HepG2 (cell line): ENCODE measurements at regions of chrX and their contacts with region 1.

Region 1: DNA sequence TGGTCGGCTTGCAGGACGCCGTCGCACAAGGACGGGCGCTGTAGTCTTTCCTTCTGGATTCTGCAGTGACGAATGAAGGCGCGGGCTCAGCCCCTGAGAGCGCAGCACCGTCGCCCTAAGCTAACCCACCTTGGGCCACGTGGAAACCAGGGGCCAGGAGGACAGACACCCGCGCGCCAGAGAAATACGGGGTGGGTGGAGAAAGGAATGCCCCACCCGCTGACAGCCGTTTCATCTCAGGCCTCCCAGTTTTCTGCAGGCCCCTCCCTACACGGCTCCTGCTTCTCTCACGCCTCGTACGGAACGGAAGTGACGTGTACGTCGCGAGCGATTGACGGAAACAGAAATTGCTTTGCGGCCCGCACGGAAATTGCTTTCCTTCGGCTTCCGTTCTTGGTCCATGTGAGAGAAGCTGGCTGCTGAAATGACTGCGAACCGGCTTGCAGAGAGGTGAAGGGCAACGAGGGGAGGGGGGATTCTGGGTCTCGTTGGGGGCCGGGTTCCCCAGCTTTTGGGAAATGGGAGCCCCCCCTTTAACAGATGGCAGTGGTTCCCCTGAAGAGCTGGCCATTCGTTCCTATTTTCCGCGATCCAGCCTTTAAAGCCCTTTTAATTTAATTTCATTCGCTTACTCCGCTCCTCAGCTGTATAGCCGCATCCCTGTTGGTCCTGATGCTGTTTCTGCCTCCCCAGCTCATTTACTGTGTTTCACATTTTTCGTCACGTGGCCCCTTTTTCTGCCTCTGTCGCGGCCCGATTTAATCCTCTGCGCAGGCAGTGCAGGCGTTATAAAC is at the start of gene UTP14A:
- DNase-seq: peak; percentile 87
- ATAC-seq: peak; percentile 98
- H3K4me3 ChIP-seq: peak within 1 kb of the TSS; percentile 67 to 82 (median 72)
- H3K27ac ChIP-seq: peak within 1 kb of the TSS; percentile 71
- H3K4me1 ChIP-seq: no peaks in the 10 kb centered on the region
- H3K27me3 ChIP-seq: no peaks in the 10 kb centered on the region
- CTCF ChIP-seq: no peak
- EP300 ChIP-seq: no peak
- POLR2A ChIP-seq: peak; percentile 49 to 67
- RAD21 ChIP-seq: no peak
- total RNA-seq, gene UTP14A: 19.0 and 27.4 TPM in 2 replicates

Region 2: DNA sequence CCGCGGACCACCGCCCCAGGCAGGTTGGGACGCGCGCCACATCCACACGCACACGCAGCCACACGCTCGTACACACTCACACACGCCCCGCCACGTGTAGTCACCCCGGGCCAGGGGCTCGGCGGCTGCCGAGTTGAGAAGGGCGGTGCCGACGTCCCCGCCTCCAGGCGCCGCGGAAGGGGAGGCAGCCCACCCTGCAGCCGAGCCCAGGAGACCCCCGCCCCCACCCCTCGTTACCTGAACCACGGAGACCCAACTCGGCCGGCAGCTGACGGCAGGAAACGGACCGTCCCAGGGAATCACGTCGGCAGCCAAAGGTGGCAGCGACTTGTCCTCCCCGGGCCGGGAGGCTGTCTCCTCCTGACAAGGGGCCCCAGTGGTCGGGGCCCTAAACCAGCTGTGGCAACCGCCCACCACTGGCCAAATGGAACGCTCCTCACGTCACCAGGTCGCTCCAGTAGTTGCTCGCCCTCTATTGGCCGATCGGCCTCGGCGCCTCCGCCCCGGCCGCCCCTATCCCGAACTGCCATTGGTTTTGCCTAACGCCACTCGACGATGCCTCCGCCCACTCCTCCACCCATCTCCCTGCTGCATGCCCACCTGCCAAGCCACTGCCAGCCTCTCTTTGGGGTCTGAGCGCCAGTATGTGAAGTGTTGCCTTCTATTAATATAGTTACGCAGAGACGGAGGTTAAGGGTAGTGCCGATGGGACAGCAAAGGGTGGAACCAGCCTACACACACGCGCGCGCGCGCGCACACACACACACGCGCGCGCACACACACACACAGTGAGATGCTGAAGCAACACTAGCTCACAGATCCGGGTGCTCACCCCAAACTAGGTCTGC is 62.3 kb before region 1 on chrX and contains the start of gene ZDHHC9:
- CTCF ChIA-PET with region 1: no interaction called
- POLR2A ChIA-PET with region 1: no interaction called
- in situ Hi-C with region 1: loop called (anchors 10 kb)
- intact Hi-C with region 1: loop called (anchors 10 kb)
- DNase-seq: peak; percentile 76
- ATAC-seq: peak; percentile 93
- H3K4me3 ChIP-seq: peak within 1 kb of the TSS; percentile 65 to 81 (median 77)
- H3K27ac ChIP-seq: peak within 1 kb of the TSS; percentile 73
- H3K4me1 ChIP-seq: peaks cover 50% of the 10 kb centered on the region
- H3K27me3 ChIP-seq: no peaks in the 10 kb centered on the region
- CTCF ChIP-seq: no peak
- EP300 ChIP-seq: no peak
- POLR2A ChIP-seq: peak; percentile 77 to 80
- RAD21 ChIP-seq: no peak
- total RNA-seq, gene ZDHHC9: 14.5 and 28.3 TPM in 2 replicates

Region 3: GRCh38 chrX:130009658-130010223 is 103.8 kb after region 1 on chrX:
- CTCF ChIA-PET with region 1: no interaction called
- POLR2A ChIA-PET with region 1: no interaction called
- in situ Hi-C with region 1: no loop called
- intact Hi-C with region 1: no loop called
- DNase-seq: peak; percentile 3
- ATAC-seq: peak; percentile 87
- H3K4me3 ChIP-seq: no peak overlapping the region
- H3K27ac ChIP-seq: peak overlapping the region; percentile 40
- H3K4me1 ChIP-seq: peaks cover 29% of the 10 kb centered on the region
- H3K27me3 ChIP-seq: no peaks in the 10 kb centered on the region
- CTCF ChIP-seq: no peak
- EP300 ChIP-seq: no peak
- POLR2A ChIP-seq: no peak
- RAD21 ChIP-seq: no peak

Region 4: DNA sequence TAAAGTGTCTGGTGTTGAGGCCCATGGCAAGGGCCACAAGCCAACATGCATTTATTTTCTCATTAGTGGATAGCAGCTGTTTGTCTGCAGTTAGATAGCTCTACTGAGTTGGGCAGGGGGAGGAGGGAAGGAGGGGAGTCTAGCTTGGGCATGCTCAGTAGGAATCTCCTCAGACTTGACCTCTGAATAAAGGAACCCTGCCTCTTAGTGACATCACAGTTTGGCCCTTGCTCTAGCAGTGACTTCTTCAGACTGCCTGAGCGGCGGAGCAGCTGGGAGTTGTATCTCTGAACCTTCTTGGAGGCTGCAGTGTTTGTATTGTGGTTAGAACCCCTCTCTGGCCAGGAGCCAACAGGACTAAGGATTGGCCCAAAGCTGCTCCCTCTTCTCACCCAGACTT is 133.9 kb after region 1 on chrX:
- CTCF ChIA-PET with region 1: no interaction called
- POLR2A ChIA-PET with region 1: no interaction called
- in situ Hi-C with region 1: no loop called
- intact Hi-C with region 1: no loop called
- DNase-seq: no peak
- ATAC-seq: no peak
- H3K4me3 ChIP-seq: no peak overlapping the region
- H3K27ac ChIP-seq: no peak overlapping the region
- H3K4me1 ChIP-seq: no peaks in the 10 kb centered on the region
- H3K27me3 ChIP-seq: no peaks in the 10 kb centered on the region
- CTCF ChIP-seq: no peak
- EP300 ChIP-seq: no peak
- POLR2A ChIP-seq: no peak
- RAD21 ChIP-seq: no peak